K562 (cell line): ENCODE measurements at regions of chr9 and their contacts with region 1.

Region 1: GRCh38 chr9:130107234-130107861 is 53.6 kb downstream of the GPR107 start:
- DNase-seq: peak; percentile 74 to 86 (median 75)
- ATAC-seq: peak; percentile 96
- H3K4me3 ChIP-seq: no peak overlapping the region
- H3K27ac ChIP-seq: no peak overlapping the region
- H3K4me1 ChIP-seq: peaks cover 6 to 10% of the 10 kb centered on the region in 2 experiments
- H3K27me3 ChIP-seq: no peaks in the 10 kb centered on the region
- CTCF ChIP-seq: peak; percentile 72 to 89 (median 82)
- EP300 ChIP-seq: no peak
- POLR2A ChIP-seq: no peak
- RAD21 ChIP-seq: peak; percentile 80 to 93

Region 2: GRCh38 chr9:130167927-130168326 is 60.6 kb after region 1 on chr9:
- CTCF ChIA-PET with region 1: no interaction called
- POLR2A ChIA-PET with region 1: no interaction called
- in situ Hi-C with region 1: no loop called
- intact Hi-C with region 1: loop called (anchors 5 kb)
- DNase-seq: no peak
- ATAC-seq: peak; percentile 14; the same call in 1 of the 3 replicates
- H3K4me3 ChIP-seq: no peak overlapping the region
- H3K27ac ChIP-seq: no peak overlapping the region
- H3K4me1 ChIP-seq: peaks cover 0 to 12% of the 10 kb centered on the region in 2 experiments; a peak in 3 of 5 replicates
- H3K27me3 ChIP-seq: no peaks in the 10 kb centered on the region; a peak in 1 of 5 replicates
- CTCF ChIP-seq: peak in 2 of 3 experiments; percentile 22 to 30; a peak in 3 of 6 replicates
- EP300 ChIP-seq: no peak
- POLR2A ChIP-seq: no peak
- RAD21 ChIP-seq: 0 out of 4 replicates have a peak, but pooled peaks of 1 of the 2 experiments have one; percentile 9

Region 3: DNA sequence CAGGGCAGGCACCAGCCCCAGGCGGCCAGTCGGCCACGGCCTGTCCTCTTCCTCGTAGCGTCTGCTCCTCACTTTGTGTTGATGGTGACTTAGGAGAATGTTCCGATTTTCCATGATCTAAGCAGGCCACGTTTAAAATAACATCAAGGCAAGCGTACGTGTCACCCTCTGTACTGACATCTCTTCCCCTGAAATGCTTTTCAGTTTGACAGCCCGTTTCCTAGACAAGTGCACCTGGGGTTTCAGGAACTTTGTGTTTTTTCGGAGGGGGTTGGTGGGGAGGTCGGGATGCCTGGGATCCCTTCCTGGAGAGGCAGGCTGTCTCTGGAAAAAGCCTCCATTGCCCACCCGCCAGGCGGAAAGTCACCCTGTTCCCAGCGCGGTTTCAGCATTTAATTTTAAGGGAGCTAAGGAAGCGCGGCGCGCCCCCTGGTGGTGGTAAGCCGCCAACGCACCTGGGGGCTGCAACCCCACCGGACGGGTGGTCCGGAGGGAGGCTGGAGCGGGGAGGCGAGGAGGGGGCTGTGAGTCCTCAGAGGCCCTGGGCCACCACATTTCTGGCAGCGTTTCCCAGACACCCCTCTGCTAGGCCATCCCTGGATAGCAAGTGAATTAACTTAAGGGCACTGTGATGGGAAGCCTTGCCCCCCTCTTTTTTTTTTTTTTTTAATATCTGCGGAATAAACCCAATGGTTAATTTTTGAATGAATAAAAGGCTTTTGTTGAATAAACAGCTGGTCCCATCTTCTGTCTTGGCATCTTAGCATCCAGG is 128.7 kb after region 1 on chr9:
- CTCF ChIA-PET with region 1: interaction called, 29 read pairs
- POLR2A ChIA-PET with region 1: no interaction called
- in situ Hi-C with region 1: loop called (anchors 5 kb)
- intact Hi-C with region 1: loop called (anchors 2 kb)
- DNase-seq: peak; percentile 73 to 79 (median 77)
- ATAC-seq: peak; percentile 70
- H3K4me3 ChIP-seq: no peak overlapping the region
- H3K27ac ChIP-seq: peak overlapping the region; percentile 38; the same call in 1 of the 3 replicates
- H3K4me1 ChIP-seq: peaks cover 21 to 32% of the 10 kb centered on the region in 2 experiments
- H3K27me3 ChIP-seq: no peaks in the 10 kb centered on the region
- CTCF ChIP-seq: peak; percentile 88 to 96 (median 89)
- EP300 ChIP-seq: no peak
- POLR2A ChIP-seq: no peak
- RAD21 ChIP-seq: peak; percentile 85 to 90

Region 4: GRCh38 chr9:130265431-130266235 is 158.3 kb after region 1 on chr9 and contains the start of gene HMCN2:
- CTCF ChIA-PET with region 1: no interaction called
- POLR2A ChIA-PET with region 1: no interaction called
- in situ Hi-C with region 1: no loop called
- intact Hi-C with region 1: no loop called
- DNase-seq: peak in 2 of 4 experiments; percentile 52 to 53
- ATAC-seq: peak; percentile 54
- H3K4me3 ChIP-seq: no peak within 1 kb of the TSS
- H3K27ac ChIP-seq: no peak within 1 kb of the TSS
- H3K4me1 ChIP-seq: peaks cover 0 to 15% of the 10 kb centered on the region in 2 experiments; a peak in 2 of 5 replicates
- H3K27me3 ChIP-seq: peaks cover 65 to 84% of the 10 kb centered on the region in 2 experiments; a peak in 4 of 5 replicates
- CTCF ChIP-seq: no peak
- EP300 ChIP-seq: no peak
- POLR2A ChIP-seq: no peak
- RAD21 ChIP-seq: no peak
- polyA plus RNA-seq, gene HMCN2: not detected

Region 5: GRCh38 chr9:130275771-130276520 is 168.6 kb after region 1 on chr9:
- CTCF ChIA-PET with region 1: no interaction called
- POLR2A ChIA-PET with region 1: no interaction called
- in situ Hi-C with region 1: no loop called
- intact Hi-C with region 1: no loop called
- DNase-seq: no peak
- ATAC-seq: no peak
- H3K4me3 ChIP-seq: no peak overlapping the region
- H3K27ac ChIP-seq: no peak overlapping the region
- H3K4me1 ChIP-seq: no peaks in the 10 kb centered on the region; a peak in 1 of 5 replicates
- H3K27me3 ChIP-seq: peaks cover 6 to 48% of the 10 kb centered on the region in 2 experiments
- CTCF ChIP-seq: no peak
- EP300 ChIP-seq: no peak
- POLR2A ChIP-seq: no peak
- RAD21 ChIP-seq: no peak